ENCODE measurements at regions of chr9 and their contacts with region 1.

Region 1: DNA sequence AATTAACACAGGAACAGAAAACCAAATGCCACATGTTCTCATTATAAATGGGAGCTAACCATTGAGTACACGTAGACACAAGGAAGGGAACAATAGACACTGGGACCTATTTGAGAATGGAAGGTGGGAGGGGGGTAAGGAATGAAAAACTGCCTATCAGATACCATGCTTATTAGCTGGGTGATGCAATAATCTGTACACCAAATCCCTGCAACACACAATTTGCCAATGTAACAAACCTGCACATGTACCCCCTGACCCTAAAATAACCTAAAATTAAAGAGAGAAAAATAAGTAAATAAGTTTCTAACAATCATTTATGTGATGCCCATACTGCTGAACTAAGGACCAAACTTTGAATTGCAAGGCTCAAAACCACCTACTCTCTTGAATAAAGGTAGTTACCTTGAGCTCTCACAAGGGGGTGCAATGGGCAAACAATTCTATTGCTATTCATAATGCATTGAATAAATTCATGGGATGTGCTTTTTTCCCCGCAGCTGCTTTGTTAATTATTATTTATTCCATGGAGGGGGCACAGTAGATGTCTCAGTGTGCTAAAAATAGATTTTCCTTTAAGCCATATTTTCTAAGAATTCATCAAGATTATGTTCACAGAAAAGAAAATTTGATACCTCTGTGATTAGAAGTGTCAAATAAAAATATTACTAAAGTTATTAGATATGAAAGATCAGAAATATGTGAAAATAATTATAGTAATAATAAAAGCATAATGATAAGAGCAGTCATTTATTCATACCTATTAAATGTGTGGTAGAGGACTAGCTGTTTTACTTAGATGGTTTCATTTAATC is 76.2 kb upstream of the PTPN3 start:
- DNase-seq: peak; percentile 68
- ATAC-seq: peak; percentile 91
- H3K4me3 ChIP-seq: no peak overlapping the region
- H3K27ac ChIP-seq: no peak overlapping the region
- H3K4me1 ChIP-seq: no peaks in the 10 kb centered on the region
- H3K27me3 ChIP-seq: peaks cover 4% of the 10 kb centered on the region
- CTCF ChIP-seq: peak; percentile 85
- POLR2A ChIP-seq: no peak
- RAD21 ChIP-seq: peak; percentile 92

Region 2: DNA sequence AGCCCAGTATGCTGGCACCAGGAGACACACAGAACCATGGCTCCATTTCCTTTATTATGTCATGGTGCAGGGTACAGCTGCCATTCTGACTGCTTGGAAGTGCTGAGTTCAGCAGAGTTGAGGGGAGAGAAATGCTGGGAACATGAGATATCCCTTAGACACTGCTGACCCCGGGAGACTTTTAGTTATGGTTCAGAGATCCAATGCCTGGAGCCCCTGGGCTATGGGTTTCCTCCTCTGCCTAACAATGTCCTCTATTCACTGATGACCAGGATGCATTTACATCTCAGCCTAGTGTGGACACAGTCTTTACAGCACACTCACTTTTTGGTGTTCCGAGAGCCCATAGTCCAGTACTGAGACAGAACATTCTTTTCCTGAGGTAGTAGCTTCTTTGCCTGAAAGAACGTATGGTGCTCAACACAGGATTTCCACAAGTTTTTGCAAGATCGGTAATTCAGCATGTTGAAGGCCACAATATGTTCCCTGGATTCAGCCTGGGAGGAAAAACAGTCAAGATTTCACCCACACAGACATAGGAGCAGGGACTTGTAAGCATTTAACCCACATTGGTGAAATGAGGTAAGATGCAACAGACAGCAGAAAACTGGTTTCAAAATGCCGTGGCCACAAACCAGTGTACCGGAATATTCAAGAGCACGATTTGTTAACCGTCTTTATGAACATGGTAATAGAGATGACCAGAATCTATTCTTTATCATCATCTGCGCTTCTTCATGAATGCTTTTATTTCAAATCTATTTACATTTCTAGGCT is 147.5 kb before region 1 on chr9:
- CTCF ChIA-PET with region 1: no interaction called
- POLR2A ChIA-PET with region 1: no interaction called
- dilution Hi-C with region 1: no loop called
- in situ Hi-C with region 1: no loop called
- intact Hi-C with region 1: no loop called
- DNase-seq: no peak
- ATAC-seq: no peak
- H3K4me3 ChIP-seq: no peak overlapping the region
- H3K27ac ChIP-seq: no peak overlapping the region
- H3K4me1 ChIP-seq: no peaks in the 10 kb centered on the region
- H3K27me3 ChIP-seq: no peaks in the 10 kb centered on the region
- CTCF ChIP-seq: no peak
- POLR2A ChIP-seq: no peak
- RAD21 ChIP-seq: no peak

Region 3: DNA sequence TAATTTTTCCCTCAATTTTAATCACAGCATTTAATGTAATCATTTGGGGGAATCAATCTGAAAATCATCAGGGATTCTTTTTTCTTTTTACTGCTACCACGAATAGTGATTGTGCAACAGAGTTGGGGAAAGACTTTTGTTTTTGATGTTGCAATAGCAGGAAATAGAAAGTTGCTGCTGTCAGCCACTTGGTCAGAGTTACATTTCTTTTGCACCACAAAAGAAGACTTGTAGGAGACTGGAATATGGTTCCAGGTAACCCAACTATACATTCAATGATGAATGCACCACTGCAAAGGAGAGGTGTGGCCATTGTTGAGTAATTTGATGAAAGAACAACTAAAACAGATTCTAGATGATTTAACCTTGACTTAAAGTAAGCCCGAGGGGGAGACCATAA is 159.4 kb after region 1 on chr9:
- CTCF ChIA-PET with region 1: no interaction called
- POLR2A ChIA-PET with region 1: no interaction called
- dilution Hi-C with region 1: no loop called
- in situ Hi-C with region 1: no loop called
- intact Hi-C with region 1: no loop called
- DNase-seq: peak; percentile 64
- ATAC-seq: no peak
- H3K4me3 ChIP-seq: no peak overlapping the region
- H3K27ac ChIP-seq: no peak overlapping the region
- H3K4me1 ChIP-seq: peaks cover 6% of the 10 kb centered on the region; the same call in 1 of the 2 replicates
- H3K27me3 ChIP-seq: peaks cover 2% of the 10 kb centered on the region
- CTCF ChIP-seq: no peak
- POLR2A ChIP-seq: no peak
- RAD21 ChIP-seq: no peak

Region 4: GRCh38 chr9:109817846-109818472 is 243.7 kb after region 1 on chr9:
- CTCF ChIA-PET with region 1: interaction called, 18 read pairs
- POLR2A ChIA-PET with region 1: no interaction called
- dilution Hi-C with region 1: no loop called
- in situ Hi-C with region 1: loop called (anchors 10 kb)
- intact Hi-C with region 1: loop called (anchors 1 kb)
- DNase-seq: peak; percentile 99
- ATAC-seq: peak; percentile 66
- H3K4me3 ChIP-seq: no peak overlapping the region
- H3K27ac ChIP-seq: peak overlapping the region; percentile 54
- H3K4me1 ChIP-seq: peaks cover 21% of the 10 kb centered on the region
- H3K27me3 ChIP-seq: no peaks in the 10 kb centered on the region
- CTCF ChIP-seq: peak; percentile 97
- POLR2A ChIP-seq: peak; percentile 60; the same call in 1 of the 2 replicates
- RAD21 ChIP-seq: peak; percentile 88

Region 5: DNA sequence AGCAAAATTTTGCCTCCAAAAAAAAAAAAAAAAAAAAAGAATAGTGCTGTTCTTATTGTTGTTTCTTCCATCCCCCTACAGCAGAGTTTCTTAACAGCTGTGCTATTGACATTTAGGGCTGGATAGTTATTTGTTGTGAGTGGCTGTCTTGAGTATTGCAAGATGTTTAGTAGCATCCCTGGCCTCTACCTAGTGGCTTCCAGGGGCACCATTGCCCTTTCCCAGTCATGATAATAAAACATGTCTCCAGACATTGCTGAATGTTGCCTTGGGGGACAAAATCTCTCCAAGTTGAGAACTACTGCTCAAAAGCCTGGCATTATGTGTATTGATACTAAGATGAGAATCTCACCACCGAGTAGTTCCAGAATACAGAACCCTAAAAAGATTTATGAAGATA is 314.4 kb after region 1 on chr9:
- CTCF ChIA-PET with region 1: no interaction called
- POLR2A ChIA-PET with region 1: no interaction called
- dilution Hi-C with region 1: no loop called
- in situ Hi-C with region 1: loop called (anchors 5 kb)
- intact Hi-C with region 1: loop called (anchors 1 kb)
- DNase-seq: no peak
- ATAC-seq: no peak
- H3K4me3 ChIP-seq: no peak overlapping the region
- H3K27ac ChIP-seq: no peak overlapping the region
- H3K4me1 ChIP-seq: peaks cover 8% of the 10 kb centered on the region
- H3K27me3 ChIP-seq: no peaks in the 10 kb centered on the region
- CTCF ChIP-seq: no peak
- POLR2A ChIP-seq: no peak
- RAD21 ChIP-seq: no peak

Region 6: GRCh38 chr9:109894921-109895758 is 320.9 kb after region 1 on chr9:
- CTCF ChIA-PET with region 1: interaction called, 3 read pairs
- POLR2A ChIA-PET with region 1: no interaction called
- dilution Hi-C with region 1: no loop called
- in situ Hi-C with region 1: loop called (anchors 5 kb)
- intact Hi-C with region 1: no loop called
- DNase-seq: peak; percentile 89
- ATAC-seq: peak; percentile 91
- H3K4me3 ChIP-seq: no peak overlapping the region
- H3K27ac ChIP-seq: no peak overlapping the region
- H3K4me1 ChIP-seq: peaks cover 5% of the 10 kb centered on the region; the same call in 1 of the 2 replicates
- H3K27me3 ChIP-seq: no peaks in the 10 kb centered on the region
- CTCF ChIP-seq: no peak
- POLR2A ChIP-seq: no peak
- RAD21 ChIP-seq: no peak

Region 7: DNA sequence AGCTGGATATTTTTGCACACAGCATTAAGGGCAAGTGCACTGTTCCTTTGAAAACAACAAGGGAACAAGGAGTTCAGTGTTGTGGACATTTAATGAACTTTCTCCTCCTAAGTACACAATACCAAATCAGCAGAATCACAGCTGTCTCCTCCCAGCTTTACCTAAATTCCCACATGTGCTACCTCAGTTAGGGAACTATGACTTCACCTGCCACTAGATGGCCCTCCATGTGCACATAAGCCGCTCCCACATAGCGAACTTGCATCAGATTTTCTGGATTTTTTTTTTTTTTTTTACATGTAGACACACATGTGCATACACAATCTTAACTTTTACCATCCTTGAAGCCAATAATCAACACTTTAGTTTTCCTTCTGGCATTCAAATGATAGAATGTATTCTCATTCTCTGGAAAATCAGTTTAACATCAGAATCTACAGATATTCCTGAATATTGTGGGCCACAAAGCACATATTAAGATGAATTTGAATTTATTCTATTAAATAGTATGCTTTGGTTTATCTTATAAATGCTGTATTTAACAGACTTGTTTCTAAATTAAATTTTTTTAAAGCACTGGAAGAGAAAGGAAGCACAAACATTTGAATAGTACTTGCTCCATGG is 329.4 kb after region 1 on chr9:
- CTCF ChIA-PET with region 1: interaction called, 3 read pairs
- POLR2A ChIA-PET with region 1: no interaction called
- dilution Hi-C with region 1: no loop called
- in situ Hi-C with region 1: no loop called
- intact Hi-C with region 1: loop called (anchors 1 kb)
- DNase-seq: peak; percentile 83
- ATAC-seq: peak; percentile 59
- H3K4me3 ChIP-seq: no peak overlapping the region
- H3K27ac ChIP-seq: no peak overlapping the region
- H3K4me1 ChIP-seq: peaks cover 20% of the 10 kb centered on the region
- H3K27me3 ChIP-seq: no peaks in the 10 kb centered on the region
- CTCF ChIP-seq: peak; percentile 93
- POLR2A ChIP-seq: no peak
- RAD21 ChIP-seq: peak; percentile 97

Region 8: GRCh38 chr9:110152704-110153374 is 578.6 kb after region 1 on chr9:
- CTCF ChIA-PET with region 1: no interaction called
- POLR2A ChIA-PET with region 1: no interaction called
- dilution Hi-C with region 1: no loop called
- in situ Hi-C with region 1: loop called (anchors 25 kb)
- intact Hi-C with region 1: loop called (anchors 2 kb)
- DNase-seq: peak; percentile 72
- ATAC-seq: peak; percentile 48
- H3K4me3 ChIP-seq: no peak overlapping the region
- H3K27ac ChIP-seq: peak overlapping the region; percentile 24; the same call in 1 of the 2 replicates
- H3K4me1 ChIP-seq: peaks cover 28% of the 10 kb centered on the region
- H3K27me3 ChIP-seq: no peaks in the 10 kb centered on the region
- CTCF ChIP-seq: peak; percentile 76
- POLR2A ChIP-seq: no peak
- RAD21 ChIP-seq: peak; percentile 84

Region 9: GRCh38 chr9:110217656-110218099 is 643.4 kb after region 1 on chr9:
- CTCF ChIA-PET with region 1: no interaction called
- POLR2A ChIA-PET with region 1: no interaction called
- dilution Hi-C with region 1: no loop called
- in situ Hi-C with region 1: loop called (anchors 10 kb)
- intact Hi-C with region 1: loop called (anchors 2 kb)
- DNase-seq: peak; percentile 63
- ATAC-seq: peak; percentile 74
- H3K4me3 ChIP-seq: no peak overlapping the region
- H3K27ac ChIP-seq: no peak overlapping the region
- H3K4me1 ChIP-seq: no peaks in the 10 kb centered on the region; the same call in 1 of the 2 replicates
- H3K27me3 ChIP-seq: peaks cover 2% of the 10 kb centered on the region
- CTCF ChIP-seq: peak; percentile 75
- POLR2A ChIP-seq: no peak
- RAD21 ChIP-seq: peak; percentile 68